ENCODE measurements at regions of chr18 and their contacts with region 1.

Region 1: GRCh38 chr18:31447530-31448191 is at the start of gene DSG3:
- DNase-seq: peak; percentile 94
- H3K4me3 Mint-ChIP-seq: peak within 1 kb of the TSS; percentile 75
- H3K27ac Mint-ChIP-seq: peak within 1 kb of the TSS; percentile 88
- H3K4me1 Mint-ChIP-seq: peaks cover 9% of the 10 kb centered on the region
- H3K27me3 Mint-ChIP-seq: no peaks in the 10 kb centered on the region
- CTCF ChIP-seq: no peak
- total RNA-seq, gene DSG3: 65.4 and 68.5 TPM in 2 replicates

Region 2: GRCh38 chr18:31101183-31102024 is 346.3 kb before region 1 on chr18:
- CTCF ChIA-PET with region 1: no interaction called
- POLR2A ChIA-PET with region 1: interaction called, 16 read pairs
- intact Hi-C with region 1: no loop called
- DNase-seq: peak; percentile 53
- H3K4me3 Mint-ChIP-seq: peak overlapping the region; percentile 82
- H3K27ac Mint-ChIP-seq: peak overlapping the region; percentile 81
- H3K4me1 Mint-ChIP-seq: peaks cover 30% of the 10 kb centered on the region
- H3K27me3 Mint-ChIP-seq: no peaks in the 10 kb centered on the region
- CTCF ChIP-seq: no peak

Region 3: GRCh38 chr18:31255953-31256352 is 191.7 kb before region 1 on chr18:
- CTCF ChIA-PET with region 1: no interaction called
- POLR2A ChIA-PET with region 1: interaction called, 187 read pairs
- intact Hi-C with region 1: no loop called
- DNase-seq: peak; percentile 85
- H3K4me3 Mint-ChIP-seq: peak overlapping the region; percentile 12
- H3K27ac Mint-ChIP-seq: peak overlapping the region; percentile 64
- H3K4me1 Mint-ChIP-seq: peaks cover 16% of the 10 kb centered on the region
- H3K27me3 Mint-ChIP-seq: no peaks in the 10 kb centered on the region
- CTCF ChIP-seq: no peak

Region 4: GRCh38 chr18:31274915-31275314 is 172.7 kb before region 1 on chr18:
- CTCF ChIA-PET with region 1: no interaction called
- POLR2A ChIA-PET with region 1: interaction called, 192 read pairs
- intact Hi-C with region 1: no loop called
- DNase-seq: peak; percentile 99
- H3K4me3 Mint-ChIP-seq: peak overlapping the region; percentile 59
- H3K27ac Mint-ChIP-seq: peak overlapping the region; percentile 97
- H3K4me1 Mint-ChIP-seq: peaks cover 34% of the 10 kb centered on the region
- H3K27me3 Mint-ChIP-seq: no peaks in the 10 kb centered on the region
- CTCF ChIP-seq: no peak

Region 5: DNA sequence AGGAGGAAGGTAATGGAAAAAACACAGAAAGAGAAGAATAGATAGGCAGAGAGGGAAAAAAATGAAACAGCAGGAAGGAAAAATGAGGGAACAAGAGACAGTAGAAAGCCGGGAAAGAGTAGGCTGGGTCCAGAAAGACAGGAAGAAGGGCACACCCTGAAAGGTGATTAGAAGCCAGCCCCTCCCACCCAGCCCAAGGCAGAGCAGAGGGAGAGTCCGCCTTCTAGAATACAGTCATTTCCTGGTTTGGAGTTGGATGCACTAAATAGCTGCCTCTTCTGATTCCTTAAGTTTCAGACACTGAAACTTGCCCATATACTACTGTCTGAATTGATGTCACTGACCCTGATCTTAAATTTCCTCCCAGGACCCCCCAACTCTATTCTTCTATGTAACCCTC is 18.0 kb before region 1 on chr18:
- CTCF ChIA-PET with region 1: interaction called, 13 read pairs
- POLR2A ChIA-PET with region 1: interaction called, 219 read pairs
- intact Hi-C with region 1: loop called (anchors 2 kb)
- DNase-seq: peak; percentile 72
- H3K4me3 Mint-ChIP-seq: peak overlapping the region; percentile 5
- H3K27ac Mint-ChIP-seq: peak overlapping the region; percentile 46
- H3K4me1 Mint-ChIP-seq: peaks cover 18% of the 10 kb centered on the region
- H3K27me3 Mint-ChIP-seq: no peaks in the 10 kb centered on the region
- CTCF ChIP-seq: no peak

Region 6: DNA sequence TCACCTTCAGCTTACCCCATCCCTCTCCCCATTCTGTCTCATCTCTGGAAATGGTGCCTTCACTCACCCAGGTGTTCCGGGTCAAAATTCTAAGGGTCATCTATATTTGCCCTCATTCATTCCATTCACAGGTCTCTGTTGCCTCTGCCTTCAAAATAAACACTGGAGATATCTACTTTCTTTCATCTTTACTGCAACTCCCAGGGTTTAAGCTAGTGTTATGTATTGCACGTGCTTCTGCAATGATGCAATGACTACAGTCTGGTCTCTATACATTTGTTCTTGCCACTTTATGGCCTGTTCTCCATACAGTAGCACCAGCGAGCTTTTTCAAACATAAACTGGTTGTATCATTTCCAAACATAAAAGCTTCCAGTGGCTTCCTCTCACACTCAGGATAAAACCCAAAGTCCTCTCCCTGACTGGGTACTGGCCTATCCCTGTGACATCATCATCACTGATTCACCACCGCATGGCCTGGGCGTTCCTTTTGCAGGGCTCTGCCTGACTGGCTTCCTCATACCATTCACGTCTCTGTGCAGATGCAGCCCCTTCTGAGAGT is 64.6 kb after region 1 on chr18:
- CTCF ChIA-PET with region 1: interaction called, 5 read pairs
- POLR2A ChIA-PET with region 1: interaction called, 86 read pairs
- intact Hi-C with region 1: no loop called
- DNase-seq: peak; percentile 87
- H3K4me3 Mint-ChIP-seq: peak overlapping the region; percentile 59
- H3K27ac Mint-ChIP-seq: peak overlapping the region; percentile 95
- H3K4me1 Mint-ChIP-seq: peaks cover 51% of the 10 kb centered on the region
- H3K27me3 Mint-ChIP-seq: no peaks in the 10 kb centered on the region
- CTCF ChIP-seq: no peak